ENCODE measurements at regions of chr12 and their contacts with region 1.

Region 1: DNA sequence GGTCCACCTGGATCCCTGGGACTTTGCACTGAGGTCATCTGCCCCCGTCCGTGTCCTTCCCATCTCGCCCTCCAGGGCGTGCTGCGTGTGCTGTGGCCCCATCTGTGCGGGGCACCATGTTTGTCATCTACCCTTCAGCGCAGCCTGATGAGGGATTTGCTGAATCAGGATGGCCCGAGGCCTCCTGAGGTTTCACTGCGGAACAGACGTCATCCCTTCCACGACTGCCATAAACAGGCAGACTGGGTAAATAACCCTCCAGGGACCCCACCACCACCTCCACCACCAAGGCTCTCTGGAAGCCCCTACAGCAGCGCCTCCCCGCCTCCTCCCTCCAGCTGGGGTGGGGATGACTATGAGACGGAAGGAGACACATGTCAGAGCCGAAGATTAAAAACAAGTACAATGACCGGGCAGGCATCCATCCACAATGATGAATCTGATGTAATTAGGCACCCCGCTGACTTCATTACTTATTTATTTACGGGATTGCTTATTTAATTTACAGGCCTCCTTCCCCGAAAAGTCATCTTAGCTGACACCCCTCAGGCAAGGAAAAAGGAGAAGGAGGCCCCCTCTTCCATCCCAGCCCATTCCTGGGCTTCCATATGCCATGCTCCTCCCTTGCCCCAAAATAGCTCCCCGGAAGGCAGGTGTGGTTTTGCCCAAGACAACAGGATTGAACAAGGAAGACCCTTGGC is 39.4 kb downstream of the NCOR2 start:
- DNase-seq: no peak
- ATAC-seq: no peak
- H3K4me3 ChIP-seq: no peak overlapping the region
- H3K27ac ChIP-seq: no peak overlapping the region
- H3K4me1 ChIP-seq: peaks cover 11% of the 10 kb centered on the region
- H3K27me3 ChIP-seq: no peaks in the 10 kb centered on the region
- CTCF ChIP-seq: no peak
- POLR2A ChIP-seq: no peak

Region 2: GRCh38 chr12:124188561-124189405 is 339.2 kb before region 1 on chr12:
- intact Hi-C with region 1: no loop called
- DNase-seq: peak in 2 of 4 donors; percentile 10 to 15
- ATAC-seq: peak; percentile 65
- H3K4me3 ChIP-seq: no peak overlapping the region
- H3K27ac ChIP-seq: no peak overlapping the region
- H3K4me1 ChIP-seq: peaks cover 15% of the 10 kb centered on the region
- H3K27me3 ChIP-seq: no peaks in the 10 kb centered on the region
- CTCF ChIP-seq: no peak
- POLR2A ChIP-seq: no peak

Region 3: DNA sequence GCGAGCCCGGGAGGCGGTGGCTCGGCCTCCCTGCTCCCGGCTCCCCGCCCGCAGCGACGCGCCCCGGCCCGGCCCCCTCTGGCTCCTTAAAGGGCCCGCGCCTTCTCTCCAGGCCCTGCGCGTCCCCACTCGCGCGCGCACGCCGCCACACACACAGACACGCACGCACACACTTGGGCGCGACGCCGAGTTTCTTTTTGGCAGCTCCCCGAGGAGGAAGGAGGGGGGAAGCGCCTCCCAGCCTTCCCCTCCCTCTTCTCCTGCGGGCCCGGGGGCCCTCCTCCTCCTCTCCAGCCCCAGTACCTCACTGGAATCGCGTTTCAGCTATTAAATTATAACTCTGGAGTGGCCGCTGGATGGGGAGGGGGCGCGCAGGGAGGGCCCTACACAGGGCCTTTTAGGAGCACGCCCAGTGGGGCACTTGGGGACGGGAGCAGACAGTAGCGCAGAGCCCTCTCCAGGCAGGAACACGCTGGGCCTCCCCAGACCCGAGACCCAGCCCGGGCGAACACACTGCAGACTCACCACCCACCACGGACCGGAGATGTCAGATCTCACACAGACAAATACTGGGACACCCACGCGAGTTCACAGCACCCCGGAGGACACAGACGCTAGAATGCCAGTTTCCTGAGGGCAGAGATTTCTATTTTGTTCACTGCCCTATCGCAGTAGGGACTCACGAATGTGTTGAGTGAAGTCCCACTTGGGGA is 39.8 kb after region 1 on chr12:
- intact Hi-C with region 1: loop called (anchors 5 kb)
- DNase-seq: peak; percentile 86 to 91 (median 89)
- ATAC-seq: peak; percentile 84
- H3K4me3 ChIP-seq: no peak overlapping the region
- H3K27ac ChIP-seq: peak overlapping the region; percentile 46 to 84 (median 69)
- H3K4me1 ChIP-seq: peaks cover 47% of the 10 kb centered on the region
- H3K27me3 ChIP-seq: no peaks in the 10 kb centered on the region
- CTCF ChIP-seq: no peak
- POLR2A ChIP-seq: no peak